Heart right ventricle (tissue), 16 donors: ENCODE measurements at regions of chr11 and their contacts with region 1.

Region 1: DNA sequence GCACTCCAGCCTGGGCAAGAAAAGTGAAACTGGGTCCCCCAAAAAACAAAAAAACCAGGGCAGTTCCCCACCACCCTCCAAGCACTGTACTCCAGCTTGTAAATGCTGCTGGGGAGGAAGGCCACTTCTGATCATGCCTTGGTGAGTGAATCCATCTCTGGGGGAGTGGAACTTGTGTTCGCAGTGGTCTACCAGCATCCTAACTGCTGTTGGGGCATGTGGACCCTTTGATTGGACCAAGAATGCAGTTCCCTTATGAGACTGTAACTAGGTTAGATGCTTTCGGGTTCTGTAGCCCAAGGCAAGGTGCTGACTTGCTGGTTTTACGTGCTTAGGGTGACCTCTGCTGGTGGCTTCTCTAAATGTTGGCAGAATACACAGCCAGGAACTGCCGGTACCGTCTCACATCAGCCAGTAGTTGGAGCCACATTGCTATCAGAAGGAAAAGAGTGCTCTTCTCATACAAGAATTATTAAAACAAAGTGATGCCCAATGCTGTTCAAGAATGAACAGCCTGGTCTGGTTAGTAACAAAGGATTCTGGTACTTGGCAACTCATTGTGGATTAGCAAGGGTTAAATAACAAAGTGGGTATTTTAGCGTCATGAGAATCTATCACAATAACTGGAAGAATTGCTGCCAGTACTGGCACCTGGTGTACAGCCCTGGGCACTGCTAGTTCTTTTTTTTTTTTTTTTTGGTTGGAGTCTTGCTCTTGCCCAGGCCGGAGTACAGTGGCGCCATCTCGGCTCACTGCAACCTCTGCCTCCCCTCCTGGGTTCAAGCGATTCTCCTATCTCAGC is 13.0 kb downstream of the EIF1AD start:
- DNase-seq: peak; percentile 56 to 93
- ATAC-seq: peak; percentile 96 to 99 (median 98)
- H3K4me3 ChIP-seq: no peak overlapping the region
- H3K27ac ChIP-seq: no peak overlapping the region
- H3K4me1 ChIP-seq: peaks cover 0 to 10% (median 0%) of the 10 kb centered on the region in 9 donors
- H3K27me3 ChIP-seq: no peaks in the 10 kb centered on the region
- CTCF ChIP-seq: peak; percentile 77 to 99 (median 91)

Region 2: DNA sequence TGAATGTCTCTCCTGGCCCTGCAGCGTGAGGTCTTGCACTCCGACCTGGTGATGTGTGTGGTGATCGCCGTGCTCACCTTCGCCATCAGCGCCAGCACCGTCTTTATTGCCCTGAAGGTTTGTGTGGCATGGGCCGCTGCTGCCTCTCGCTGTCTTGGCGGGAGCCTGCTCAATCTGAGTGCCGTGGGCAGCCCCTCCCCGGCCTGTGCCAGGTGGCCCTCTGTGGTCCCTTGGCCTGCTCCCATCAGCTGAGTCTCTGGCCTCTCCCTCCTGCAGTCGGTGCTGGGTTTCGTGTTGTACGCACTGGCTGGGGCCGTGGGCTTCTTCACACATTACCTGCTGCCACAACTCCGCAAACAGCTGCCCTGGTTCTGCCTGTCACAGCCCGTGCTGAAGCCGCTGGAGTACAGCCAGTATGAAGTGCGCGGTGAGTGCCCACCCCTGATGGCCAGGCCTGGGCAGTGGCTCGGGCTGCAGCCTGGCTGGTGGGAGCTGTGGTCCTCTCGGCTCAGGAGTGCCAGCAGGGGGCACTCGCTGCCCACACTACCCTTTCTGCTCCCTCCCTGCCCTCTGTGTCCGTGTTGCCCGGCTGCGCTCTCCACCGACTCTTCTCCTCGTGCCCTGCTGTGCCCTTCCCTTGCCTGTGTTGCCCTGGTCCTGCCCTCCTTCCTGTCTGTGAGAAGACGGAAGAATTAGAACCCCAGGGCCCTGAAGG is 363.2 kb before region 1 on chr11:
- intact Hi-C with region 1: loop called in 2 of 10 experiments (anchors 10 kb)
- DNase-seq: peak; percentile 54 to 69
- ATAC-seq: peak; percentile 51 to 84 (median 78)
- H3K4me3 ChIP-seq: no peak overlapping the region
- H3K27ac ChIP-seq: peak overlapping the region in 1 of 10 donors; percentile 9
- H3K4me1 ChIP-seq: peaks cover 0 to 22% (median 7%) of the 10 kb centered on the region in 9 donors
- H3K27me3 ChIP-seq: no peaks in the 10 kb centered on the region
- CTCF ChIP-seq: peak; percentile 54 to 75 (median 69)

Region 3: GRCh38 chr11:65695456-65696241 is 293.3 kb before region 1 on chr11:
- intact Hi-C with region 1: loop called in 1 of 10 experiments (anchors 5 kb)
- DNase-seq: peak; percentile 41 to 77
- ATAC-seq: peak; percentile 61 to 89 (median 76)
- H3K4me3 ChIP-seq: no peak overlapping the region
- H3K27ac ChIP-seq: peak overlapping the region in 6 of 10 donors; percentile 28 to 70 (median 59)
- H3K4me1 ChIP-seq: peaks cover 0 to 29% (median 12%) of the 10 kb centered on the region in 9 donors
- H3K27me3 ChIP-seq: no peaks in the 10 kb centered on the region
- CTCF ChIP-seq: no peak

Region 4: GRCh38 chr11:65720237-65720934 is 268.6 kb before region 1 on chr11 and contains the start of gene RNASEH2C:
- intact Hi-C with region 1: loop called in 1 of 10 experiments (anchors 10 kb)
- DNase-seq: peak; percentile 83 to 85
- ATAC-seq: peak; percentile 96 to 98 (median 96)
- H3K4me3 ChIP-seq: peak within 1 kb of the TSS; percentile 54 to 93 (median 70)
- H3K27ac ChIP-seq: peak within 1 kb of the TSS; percentile 39 to 95 (median 90)
- H3K4me1 ChIP-seq: peaks cover 10 to 23% (median 19%) of the 10 kb centered on the region in 9 donors
- H3K27me3 ChIP-seq: no peaks in the 10 kb centered on the region
- CTCF ChIP-seq: peak in 1 of 9 donors; percentile 10
- total RNA-seq, gene RNASEH2C: 34.1 to 75.6 (median 43.5) TPM

Region 5: DNA sequence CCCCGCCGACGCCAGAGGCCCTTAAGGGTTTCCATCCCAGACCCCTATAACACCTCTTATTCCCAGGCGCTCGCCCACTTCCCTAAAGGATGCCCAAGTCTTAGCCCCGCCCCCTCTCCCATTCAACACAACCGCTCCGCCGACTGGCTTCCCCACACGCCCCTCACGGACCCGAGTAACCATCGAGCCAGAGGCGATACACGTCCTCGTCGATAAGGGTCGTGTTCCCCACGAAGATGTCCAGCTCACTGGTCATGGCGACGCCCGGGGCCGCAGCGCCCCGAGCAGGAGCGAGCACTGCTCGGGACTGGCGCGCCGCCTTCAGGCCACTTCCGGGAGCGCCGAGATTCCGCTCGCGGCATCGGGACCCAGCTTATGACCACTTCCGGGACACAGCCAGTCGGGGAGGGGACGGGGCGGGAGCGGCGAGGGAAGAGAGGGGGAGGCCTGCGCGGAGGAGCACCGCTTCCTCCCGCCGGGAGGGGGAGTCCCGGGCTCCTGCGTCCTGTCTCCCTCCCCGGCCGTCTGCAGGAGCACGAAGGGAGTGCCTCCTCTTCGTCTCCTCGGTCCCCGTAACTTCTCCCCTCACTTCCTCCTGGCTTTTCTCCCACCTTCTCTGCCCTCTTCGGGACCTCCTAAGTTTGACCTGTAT is 100.7 kb before region 1 on chr11 and contains the start of gene FIBP:
- intact Hi-C with region 1: loop called (anchors 1 to 5 kb)
- DNase-seq: peak; percentile 98
- ATAC-seq: peak; percentile 82 to 90 (median 87)
- H3K4me3 ChIP-seq: peak within 1 kb of the TSS; percentile 48 to 98 (median 76)
- H3K27ac ChIP-seq: peak within 1 kb of the TSS; percentile 91 to 100 (median 98)
- H3K4me1 ChIP-seq: peaks cover 20 to 70% (median 57%) of the 10 kb centered on the region in 9 donors
- H3K27me3 ChIP-seq: no peaks in the 10 kb centered on the region
- CTCF ChIP-seq: peak; percentile 81 to 93 (median 88)
- total RNA-seq, gene FIBP: 46.3 to 63.2 (median 49.9) TPM